Caco-2 (cell line): ENCODE measurements at regions of chr17 and their contacts with region 1.

Region 1: DNA sequence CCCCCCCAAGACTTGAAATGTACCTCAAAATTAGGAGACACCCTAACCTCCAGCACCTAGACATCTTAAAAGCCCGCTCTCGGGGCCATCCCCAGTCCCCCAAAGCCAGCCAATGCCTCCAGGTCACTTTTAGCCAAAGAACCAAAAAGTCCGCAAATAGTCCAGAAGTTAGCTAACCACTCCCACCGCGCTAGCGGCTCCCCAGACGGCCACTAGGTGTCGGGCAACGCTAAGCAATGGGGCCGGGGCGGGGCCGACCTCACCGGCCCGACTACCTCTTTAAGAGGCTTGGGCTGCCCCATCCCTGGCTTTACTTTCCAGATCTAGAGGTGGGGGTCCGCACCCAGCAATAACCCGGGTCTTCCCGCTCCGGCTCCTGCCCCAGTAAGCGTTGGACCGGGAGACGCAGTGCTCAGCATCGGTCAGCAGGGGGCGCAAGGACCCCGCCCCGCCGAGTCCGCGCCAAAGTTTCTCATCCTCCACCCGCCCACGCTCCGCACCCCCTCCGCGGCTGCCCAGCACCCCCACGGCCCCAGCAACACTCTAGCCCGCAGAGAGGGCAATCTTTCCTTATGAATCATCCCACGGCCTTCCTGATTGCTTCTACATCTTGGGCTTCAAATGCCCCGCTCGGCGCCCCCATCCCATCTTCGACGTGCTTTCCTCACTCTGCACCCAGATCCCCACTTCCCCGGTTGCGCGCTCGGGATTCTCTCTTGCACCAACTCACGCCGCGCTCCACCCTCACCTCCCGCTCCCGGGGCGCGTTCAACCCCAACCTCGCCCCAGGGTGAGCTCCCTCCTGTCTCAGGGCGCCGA is 765 bp downstream of the COL1A1 start:
- DNase-seq: peak; percentile 96 to 98
- H3K4me3 ChIP-seq: peak overlapping the region; percentile 42
- H3K4me3 Mint-ChIP-seq: peak overlapping the region; percentile 73
- H3K27ac Mint-ChIP-seq: peak overlapping the region; percentile 7
- H3K4me1 ChIP-seq: peaks cover 23% of the 10 kb centered on the region
- H3K4me1 Mint-ChIP-seq: peaks cover 20% of the 10 kb centered on the region
- H3K27me3 ChIP-seq: 0 out of 2 replicates have a peak, but pooled peaks cover 1% of the 10 kb centered on the region
- H3K27me3 Mint-ChIP-seq: no peaks in the 10 kb centered on the region
- CTCF ChIP-seq: peak; percentile 99 to 100

Region 2: GRCh38 chr17:49873466-49873865 is 327.2 kb before region 1 on chr17:
- CTCF ChIA-PET with region 1: no interaction called
- POLR2A ChIA-PET with region 1: no interaction called
- intact Hi-C with region 1: no loop called
- DNase-seq: peak; percentile 60 to 63
- H3K4me3 ChIP-seq: no peak overlapping the region
- H3K4me3 Mint-ChIP-seq: no peak overlapping the region
- H3K27ac Mint-ChIP-seq: peak overlapping the region; percentile 22
- H3K4me1 ChIP-seq: peaks cover 14% of the 10 kb centered on the region
- H3K4me1 Mint-ChIP-seq: peaks cover 8% of the 10 kb centered on the region
- H3K27me3 ChIP-seq: no peaks in the 10 kb centered on the region
- H3K27me3 Mint-ChIP-seq: no peaks in the 10 kb centered on the region
- CTCF ChIP-seq: no peak

Region 3: DNA sequence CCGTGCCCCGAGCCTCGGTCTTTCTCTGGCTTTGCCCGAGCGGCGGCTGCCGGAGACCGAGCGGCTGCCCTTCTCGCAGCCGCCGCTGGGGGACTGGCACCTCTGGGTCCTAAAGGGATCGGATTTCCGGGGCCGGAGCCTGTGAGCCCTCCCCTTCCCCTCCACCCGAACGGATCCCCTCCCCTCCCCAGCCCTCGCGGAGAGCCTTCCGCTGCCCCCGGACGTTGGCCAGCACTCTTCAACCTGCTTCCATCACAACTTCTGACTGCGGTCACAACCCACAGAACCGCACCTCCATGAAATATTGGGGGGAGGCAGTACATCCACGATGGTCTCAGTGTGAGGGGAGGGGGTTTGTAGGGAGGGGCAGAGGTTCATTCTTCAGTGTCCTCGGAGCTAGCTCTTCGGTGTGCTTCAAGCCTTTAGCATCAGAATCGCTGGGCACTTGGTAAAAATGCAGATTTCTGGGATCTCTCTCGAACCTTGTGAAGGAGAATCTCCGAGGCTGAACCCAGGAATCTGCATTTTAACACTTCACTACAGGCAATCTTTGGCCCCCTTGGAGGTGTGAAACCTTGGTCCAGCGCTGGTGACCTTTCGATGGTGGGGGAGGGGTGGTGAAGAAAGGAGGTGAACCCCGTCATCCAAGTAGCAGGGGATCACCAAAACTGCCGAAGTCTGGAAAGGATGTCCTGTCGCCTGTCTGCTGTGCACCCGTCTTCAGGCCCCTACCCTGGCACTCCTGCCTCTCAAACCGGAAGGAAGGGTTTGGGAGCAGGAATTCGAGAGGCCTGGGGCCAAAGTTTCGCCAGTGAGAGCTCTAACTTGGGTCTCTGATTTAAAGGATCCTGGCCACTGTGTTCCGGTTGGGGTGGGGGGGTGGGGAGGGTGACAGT is 49.4 kb before region 1 on chr17:
- CTCF ChIA-PET with region 1: interaction called, 13 read pairs
- POLR2A ChIA-PET with region 1: no interaction called
- intact Hi-C with region 1: no loop called
- DNase-seq: peak; percentile 97 to 98
- H3K4me3 ChIP-seq: peak overlapping the region; percentile 69
- H3K4me3 Mint-ChIP-seq: peak overlapping the region; percentile 81
- H3K27ac Mint-ChIP-seq: peak overlapping the region; percentile 69
- H3K4me1 ChIP-seq: peaks cover 32% of the 10 kb centered on the region
- H3K4me1 Mint-ChIP-seq: peaks cover 39% of the 10 kb centered on the region
- H3K27me3 ChIP-seq: no peaks in the 10 kb centered on the region
- H3K27me3 Mint-ChIP-seq: no peaks in the 10 kb centered on the region
- CTCF ChIP-seq: peak; percentile 97 to 98

Region 4: DNA sequence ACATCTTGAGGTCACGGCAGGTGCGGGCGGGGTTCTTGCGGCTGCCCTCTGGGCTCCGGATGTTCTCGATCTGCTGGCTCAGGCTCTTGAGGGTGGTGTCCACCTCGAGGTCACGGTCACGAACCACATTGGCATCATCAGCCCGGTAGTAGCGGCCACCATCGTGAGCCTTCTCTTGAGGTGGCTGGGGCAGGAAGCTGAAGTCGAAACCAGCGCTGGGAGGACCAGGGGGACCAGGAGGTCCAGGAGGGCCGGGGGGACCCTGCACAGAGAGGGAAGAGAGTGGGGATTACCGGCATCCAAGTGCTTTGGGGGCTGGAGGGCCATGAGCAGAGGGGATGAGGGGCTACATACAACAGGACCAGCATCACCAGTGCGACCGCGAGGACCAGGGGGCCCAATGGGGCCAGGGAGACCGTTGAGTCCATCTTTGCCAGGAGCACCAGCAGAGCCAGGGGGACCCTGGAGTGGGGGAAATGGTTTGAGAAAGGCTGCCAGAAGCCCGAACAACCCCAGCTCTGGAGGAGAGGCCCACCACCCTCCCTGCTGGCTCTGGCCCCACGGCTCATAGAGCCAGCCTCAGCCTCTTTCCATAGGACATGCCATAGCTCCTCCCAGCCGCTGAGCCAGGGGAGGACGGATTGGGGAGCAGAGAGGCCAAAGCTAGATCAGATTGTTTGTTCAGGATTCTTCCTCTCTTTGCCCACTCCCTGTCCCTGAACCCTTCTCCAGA is 13.8 kb before region 1 on chr17:
- CTCF ChIA-PET with region 1: interaction called, 4 read pairs
- POLR2A ChIA-PET with region 1: interaction called, 11 read pairs
- intact Hi-C with region 1: no loop called
- DNase-seq: no peak
- H3K4me3 ChIP-seq: no peak overlapping the region
- H3K4me3 Mint-ChIP-seq: no peak overlapping the region
- H3K27ac Mint-ChIP-seq: no peak overlapping the region
- H3K4me1 ChIP-seq: peaks cover 6% of the 10 kb centered on the region; the same call in 1 of the 2 replicates
- H3K4me1 Mint-ChIP-seq: peaks cover 6% of the 10 kb centered on the region
- H3K27me3 ChIP-seq: no peaks in the 10 kb centered on the region
- H3K27me3 Mint-ChIP-seq: no peaks in the 10 kb centered on the region
- CTCF ChIP-seq: no peak

Region 5: DNA sequence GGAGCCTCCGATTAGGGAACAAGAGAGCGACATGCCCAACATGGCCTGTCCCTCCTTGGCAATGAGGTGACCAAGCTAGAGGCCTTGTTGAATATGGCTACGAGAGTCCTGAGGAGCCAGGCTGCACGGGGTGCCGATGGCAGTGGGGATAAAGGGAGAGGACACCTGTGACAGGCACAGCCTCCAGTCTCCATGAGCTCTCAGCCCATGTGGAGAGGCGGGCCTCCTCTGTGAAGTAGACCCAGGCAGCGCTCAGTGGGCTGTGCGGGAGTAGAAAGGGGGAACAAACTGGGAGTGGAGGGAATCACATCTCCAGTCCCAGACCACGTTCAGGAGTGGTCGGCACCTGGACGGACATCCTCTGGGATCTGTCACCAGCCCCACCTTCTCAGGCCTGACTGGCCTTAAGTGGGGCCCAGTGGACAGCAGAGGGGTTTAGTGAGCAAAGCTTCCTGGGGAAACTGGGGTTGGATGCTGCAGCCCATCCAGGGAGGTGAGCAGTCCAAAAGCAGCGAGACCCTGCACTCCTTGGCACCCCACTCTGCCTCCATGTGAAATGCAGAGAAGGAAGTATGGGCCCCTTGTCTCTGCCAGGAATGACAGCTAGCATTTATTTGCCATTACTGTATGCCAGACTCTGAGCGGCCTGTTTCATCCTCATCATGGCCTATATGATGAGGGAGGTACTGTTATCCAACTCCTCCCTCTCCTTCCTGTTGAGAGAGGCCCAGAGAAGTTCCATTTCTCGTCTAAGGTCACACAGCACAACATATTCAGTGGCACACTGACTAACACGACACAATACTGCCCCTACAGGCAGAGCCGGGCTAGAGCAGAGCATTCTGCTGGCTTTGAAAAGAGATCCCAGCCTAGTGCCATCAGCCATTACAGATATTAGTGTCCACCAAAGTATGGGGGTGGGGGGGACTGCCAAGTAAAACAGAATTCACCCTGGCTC is 69.1 kb after region 1 on chr17:
- CTCF ChIA-PET with region 1: interaction called, 245 read pairs
- POLR2A ChIA-PET with region 1: interaction called, 6 read pairs
- intact Hi-C with region 1: loop called (anchors 1 kb)
- DNase-seq: peak; percentile 80 to 86
- H3K4me3 ChIP-seq: no peak overlapping the region
- H3K4me3 Mint-ChIP-seq: no peak overlapping the region
- H3K27ac Mint-ChIP-seq: no peak overlapping the region
- H3K4me1 ChIP-seq: peaks cover 22% of the 10 kb centered on the region
- H3K4me1 Mint-ChIP-seq: peaks cover 14% of the 10 kb centered on the region
- H3K27me3 ChIP-seq: no peaks in the 10 kb centered on the region
- H3K27me3 Mint-ChIP-seq: no peaks in the 10 kb centered on the region
- CTCF ChIP-seq: peak; percentile 92 to 98

Region 6: GRCh38 chr17:50297407-50297865 is 96.8 kb after region 1 on chr17:
- CTCF ChIA-PET with region 1: interaction called, 135 read pairs
- POLR2A ChIA-PET with region 1: interaction called, 3 read pairs
- intact Hi-C with region 1: loop called (anchors 1 kb)
- DNase-seq: peak; percentile 95 to 98
- H3K4me3 ChIP-seq: no peak overlapping the region
- H3K4me3 Mint-ChIP-seq: no peak overlapping the region
- H3K27ac Mint-ChIP-seq: peak overlapping the region; percentile 13
- H3K4me1 ChIP-seq: peaks cover 5% of the 10 kb centered on the region; the same call in 1 of the 2 replicates
- H3K4me1 Mint-ChIP-seq: peaks cover 10% of the 10 kb centered on the region
- H3K27me3 ChIP-seq: no peaks in the 10 kb centered on the region
- H3K27me3 Mint-ChIP-seq: no peaks in the 10 kb centered on the region
- CTCF ChIP-seq: peak; percentile 100

Region 7: GRCh38 chr17:50397111-50397918 is 196.6 kb after region 1 on chr17 and contains the start of gene LRRC59:
- CTCF ChIA-PET with region 1: interaction called, 8 read pairs
- POLR2A ChIA-PET with region 1: no interaction called
- intact Hi-C with region 1: loop called (anchors 1 kb)
- DNase-seq: peak; percentile 96 to 100
- H3K4me3 ChIP-seq: peak within 1 kb of the TSS; percentile 72
- H3K4me3 Mint-ChIP-seq: peak within 1 kb of the TSS; percentile 76
- H3K27ac Mint-ChIP-seq: peak within 1 kb of the TSS; percentile 71
- H3K4me1 ChIP-seq: peaks cover 5% of the 10 kb centered on the region; the same call in 1 of the 2 replicates
- H3K4me1 Mint-ChIP-seq: peaks cover 12% of the 10 kb centered on the region
- H3K27me3 ChIP-seq: no peaks in the 10 kb centered on the region
- H3K27me3 Mint-ChIP-seq: no peaks in the 10 kb centered on the region
- CTCF ChIP-seq: peak; percentile 100
- total RNA-seq, gene LRRC59: 324 and 336 TPM in 2 replicates